ENCODE measurements at regions of chr2 and their contacts with region 1.

Region 1: GRCh38 chr2:227774011-227774624 is 28.4 kb downstream of the SCYGR8 start:
- DNase-seq: peak in 1 of 2 donors; percentile 32
- H3K4me3 ChIP-seq: no peak overlapping the region
- CTCF ChIP-seq: no peak
- POLR2A ChIP-seq: no peak

Region 2: GRCh38 chr2:227661019-227661649 is 113.0 kb before region 1 on chr2:
- intact Hi-C with region 1: loop called (anchors 10 kb)
- DNase-seq: no peak
- H3K4me3 ChIP-seq: no peak overlapping the region
- CTCF ChIP-seq: no peak
- POLR2A ChIP-seq: no peak

Measured in lower leg skin (tissue), 4 donors.